MCF 10A (cell line): ENCODE measurements at regions of chr14 and their contacts with region 1.

Region 1: GRCh38 chr14:32076278-32077080 is 625 bp upstream of the ARHGAP5 start:
- DNase-seq: peak; percentile 97
- H3K4me3 Mint-ChIP-seq: peak overlapping the region; percentile 98
- H3K27ac Mint-ChIP-seq: peak overlapping the region; percentile 96
- H3K4me1 Mint-ChIP-seq: peaks cover 31% of the 10 kb centered on the region
- H3K27me3 Mint-ChIP-seq: no peaks in the 10 kb centered on the region
- CTCF ChIP-seq: no peak

Region 2: DNA sequence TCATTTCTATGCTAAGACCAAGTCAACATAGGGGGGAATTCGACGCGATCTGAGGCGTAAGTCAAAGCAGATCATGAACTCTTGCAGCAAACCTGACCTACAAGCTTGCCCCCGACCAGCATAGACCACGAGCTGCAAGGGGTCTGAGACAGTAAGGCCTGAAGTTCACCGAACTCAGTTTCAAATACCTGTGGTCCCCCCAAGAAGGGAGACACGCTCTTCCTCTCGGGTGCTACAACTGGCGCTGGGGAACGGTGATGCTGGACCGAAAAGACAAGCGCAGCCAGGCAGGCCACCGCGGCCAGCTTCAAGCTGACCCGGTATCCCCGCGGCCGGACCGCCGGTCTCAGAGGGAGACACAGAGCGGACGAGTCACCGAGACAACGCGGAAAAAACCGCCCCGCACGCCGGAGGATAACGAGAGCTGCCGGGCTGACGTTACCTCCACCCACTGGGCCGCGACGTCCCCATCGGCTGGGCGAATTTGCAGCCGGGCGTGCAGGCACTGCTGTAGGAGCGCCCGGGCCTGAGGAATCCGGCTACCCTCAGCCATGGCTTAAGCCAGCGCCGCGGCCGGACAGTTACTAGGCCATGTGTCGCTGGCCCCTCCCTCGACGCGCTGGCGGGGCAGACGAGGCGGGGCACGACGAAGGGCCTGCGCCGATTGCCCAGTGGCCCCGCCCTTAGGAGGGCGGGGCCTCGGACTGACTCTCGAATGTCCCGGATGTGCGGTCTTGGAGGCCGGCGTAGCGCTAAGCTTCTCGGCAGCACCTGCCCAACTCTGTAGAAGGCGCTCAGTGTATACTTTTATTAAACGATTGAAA is 619.4 kb before region 1 on chr14 and contains the start of gene DTD2:
- CTCF ChIA-PET with region 1: no interaction called
- POLR2A ChIA-PET with region 1: interaction called, 9 read pairs
- intact Hi-C with region 1: loop called (anchors 10 kb)
- DNase-seq: peak; percentile 96
- H3K4me3 Mint-ChIP-seq: peak within 1 kb of the TSS; percentile 97
- H3K27ac Mint-ChIP-seq: peak within 1 kb of the TSS; percentile 99
- H3K4me1 Mint-ChIP-seq: peaks cover 14% of the 10 kb centered on the region
- H3K27me3 Mint-ChIP-seq: no peaks in the 10 kb centered on the region
- CTCF ChIP-seq: no peak
- total RNA-seq, gene DTD2: 24.4 TPM in 2 replicates

Region 3: GRCh38 chr14:31712244-31713127 is 364.0 kb before region 1 on chr14:
- CTCF ChIA-PET with region 1: no interaction called
- POLR2A ChIA-PET with region 1: no interaction called
- intact Hi-C with region 1: no loop called
- DNase-seq: no peak
- H3K4me3 Mint-ChIP-seq: no peak overlapping the region
- H3K27ac Mint-ChIP-seq: no peak overlapping the region
- H3K4me1 Mint-ChIP-seq: no peaks in the 10 kb centered on the region
- H3K27me3 Mint-ChIP-seq: no peaks in the 10 kb centered on the region
- CTCF ChIP-seq: no peak

Region 4: GRCh38 chr14:31752867-31753661 is 323.4 kb before region 1 on chr14:
- CTCF ChIA-PET with region 1: no interaction called
- POLR2A ChIA-PET with region 1: no interaction called
- intact Hi-C with region 1: no loop called
- DNase-seq: no peak
- H3K4me3 Mint-ChIP-seq: no peak overlapping the region
- H3K27ac Mint-ChIP-seq: no peak overlapping the region
- H3K4me1 Mint-ChIP-seq: no peaks in the 10 kb centered on the region
- H3K27me3 Mint-ChIP-seq: no peaks in the 10 kb centered on the region
- CTCF ChIP-seq: no peak

Region 5: DNA sequence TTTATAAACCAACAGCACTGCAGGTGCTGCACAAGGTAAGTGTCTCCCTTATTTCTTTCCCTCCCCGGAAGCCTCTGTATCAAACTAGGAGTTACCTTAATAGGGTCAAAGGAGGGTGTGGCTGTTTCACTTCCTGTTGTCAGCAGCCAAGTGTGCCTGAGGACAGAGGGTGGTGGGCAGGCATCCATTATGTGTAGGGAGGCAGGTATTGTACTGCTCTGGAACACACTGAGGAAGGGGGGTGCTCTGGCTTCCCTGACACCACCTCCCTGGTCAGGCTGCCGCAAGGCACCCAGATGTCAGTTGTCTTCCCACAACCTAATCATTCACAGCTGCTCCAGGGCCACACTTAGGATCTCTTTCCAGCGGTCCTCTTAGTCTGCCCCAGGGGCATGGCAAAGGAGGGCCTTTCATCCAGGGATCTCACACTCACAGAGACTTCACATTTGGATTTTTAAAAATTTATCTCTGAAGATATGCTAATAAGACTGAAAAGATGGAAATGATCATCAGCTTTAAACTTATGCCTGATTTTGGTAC is 131.3 kb before region 1 on chr14:
- CTCF ChIA-PET with region 1: interaction called, 6 read pairs
- POLR2A ChIA-PET with region 1: interaction called, 74 read pairs
- intact Hi-C with region 1: no loop called
- DNase-seq: no peak
- H3K4me3 Mint-ChIP-seq: no peak overlapping the region
- H3K27ac Mint-ChIP-seq: peak overlapping the region; percentile 20
- H3K4me1 Mint-ChIP-seq: peaks cover 41% of the 10 kb centered on the region
- H3K27me3 Mint-ChIP-seq: no peaks in the 10 kb centered on the region
- CTCF ChIP-seq: no peak

Region 6: DNA sequence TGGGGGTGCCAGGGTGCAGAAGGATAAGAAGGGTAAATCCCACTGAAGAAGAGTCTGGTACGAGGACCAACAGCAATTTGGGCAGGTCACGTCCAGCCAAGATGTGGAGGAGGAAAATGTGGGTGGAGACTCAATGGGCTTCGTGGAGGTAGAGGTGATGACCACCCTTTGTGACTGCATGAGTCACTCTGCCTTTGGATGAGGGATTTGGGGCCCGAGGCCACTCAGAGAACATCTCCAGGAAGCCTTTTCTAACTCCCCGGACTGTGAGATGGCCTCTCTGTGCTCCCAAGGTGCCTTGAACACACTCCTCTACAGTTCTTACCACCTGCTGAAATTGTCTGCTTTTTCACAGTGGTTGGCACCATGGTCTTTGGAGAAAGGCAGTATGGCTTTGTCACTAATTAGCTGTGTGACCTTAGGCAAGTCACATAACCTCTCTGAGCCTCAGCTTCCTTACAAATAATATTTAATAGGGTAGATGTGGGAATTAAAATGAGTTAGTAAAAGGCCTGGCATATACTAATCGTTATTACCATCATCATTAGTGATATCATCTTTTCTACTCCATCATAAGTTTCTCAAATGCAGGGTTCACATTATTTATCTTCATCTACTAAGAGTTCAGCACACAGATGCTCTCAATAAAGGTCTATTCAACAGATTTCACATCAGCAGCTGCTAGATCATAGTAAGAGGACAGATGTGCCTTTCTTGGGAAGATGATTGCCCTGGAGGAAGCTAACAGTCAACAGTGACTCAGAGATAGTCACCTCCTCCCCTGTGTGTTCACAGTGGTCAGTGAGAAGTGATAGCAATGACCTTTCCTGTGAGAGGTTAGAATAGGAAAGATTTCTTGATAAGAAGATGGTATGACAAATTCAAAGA is 66.3 kb before region 1 on chr14:
- CTCF ChIA-PET with region 1: interaction called, 3 read pairs
- POLR2A ChIA-PET with region 1: interaction called, 26 read pairs
- intact Hi-C with region 1: no loop called
- DNase-seq: peak; percentile 71
- H3K4me3 Mint-ChIP-seq: no peak overlapping the region
- H3K27ac Mint-ChIP-seq: peak overlapping the region; percentile 62
- H3K4me1 Mint-ChIP-seq: peaks cover 38% of the 10 kb centered on the region
- H3K27me3 Mint-ChIP-seq: no peaks in the 10 kb centered on the region
- CTCF ChIP-seq: no peak

Region 7: GRCh38 chr14:32087173-32087861 is 10.8 kb after region 1 on chr14:
- CTCF ChIA-PET with region 1: interaction called, 10 read pairs
- POLR2A ChIA-PET with region 1: interaction called, 80 read pairs
- intact Hi-C with region 1: no loop called
- DNase-seq: peak; percentile 61
- H3K4me3 Mint-ChIP-seq: peak overlapping the region; percentile 31
- H3K27ac Mint-ChIP-seq: peak overlapping the region; percentile 57
- H3K4me1 Mint-ChIP-seq: peaks cover 36% of the 10 kb centered on the region
- H3K27me3 Mint-ChIP-seq: no peaks in the 10 kb centered on the region
- CTCF ChIP-seq: no peak

Region 8: DNA sequence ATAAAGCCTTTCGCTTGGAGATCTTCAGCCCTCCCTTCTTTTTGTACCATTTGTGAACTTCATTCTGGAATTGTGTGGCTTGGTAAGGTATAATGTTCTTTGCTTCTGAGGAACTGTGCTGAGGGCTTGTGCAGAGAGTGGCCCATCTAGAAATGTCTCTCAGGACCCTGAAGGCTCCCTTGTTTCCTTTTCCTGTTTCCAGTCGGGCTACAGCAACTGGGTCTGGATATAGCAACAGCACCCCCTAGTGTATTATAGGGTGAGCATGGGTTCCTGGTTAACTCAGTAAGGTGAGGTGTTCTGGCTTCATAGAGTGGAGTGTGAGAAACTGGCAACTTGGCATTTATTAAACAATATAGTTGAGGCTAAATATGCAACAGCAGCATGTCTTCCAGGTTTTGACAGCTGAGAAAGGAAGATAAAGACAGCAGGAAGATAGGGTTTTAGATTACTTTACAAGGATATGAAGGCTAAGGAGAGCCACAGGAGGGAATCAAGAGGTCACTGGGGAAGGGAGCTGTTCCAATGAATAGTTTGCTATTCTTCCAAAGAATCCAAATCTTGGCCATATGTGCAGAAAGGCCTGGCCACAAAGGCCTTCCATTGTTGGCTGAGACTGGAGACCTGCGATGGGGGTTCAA is 175.7 kb after region 1 on chr14:
- CTCF ChIA-PET with region 1: interaction called, 40 read pairs
- POLR2A ChIA-PET with region 1: interaction called, 8 read pairs
- intact Hi-C with region 1: loop called (anchors 1 kb)
- DNase-seq: peak; percentile 76
- H3K4me3 Mint-ChIP-seq: no peak overlapping the region
- H3K27ac Mint-ChIP-seq: no peak overlapping the region
- H3K4me1 Mint-ChIP-seq: peaks cover 11% of the 10 kb centered on the region
- H3K27me3 Mint-ChIP-seq: no peaks in the 10 kb centered on the region
- CTCF ChIP-seq: peak; percentile 82

Region 9: DNA sequence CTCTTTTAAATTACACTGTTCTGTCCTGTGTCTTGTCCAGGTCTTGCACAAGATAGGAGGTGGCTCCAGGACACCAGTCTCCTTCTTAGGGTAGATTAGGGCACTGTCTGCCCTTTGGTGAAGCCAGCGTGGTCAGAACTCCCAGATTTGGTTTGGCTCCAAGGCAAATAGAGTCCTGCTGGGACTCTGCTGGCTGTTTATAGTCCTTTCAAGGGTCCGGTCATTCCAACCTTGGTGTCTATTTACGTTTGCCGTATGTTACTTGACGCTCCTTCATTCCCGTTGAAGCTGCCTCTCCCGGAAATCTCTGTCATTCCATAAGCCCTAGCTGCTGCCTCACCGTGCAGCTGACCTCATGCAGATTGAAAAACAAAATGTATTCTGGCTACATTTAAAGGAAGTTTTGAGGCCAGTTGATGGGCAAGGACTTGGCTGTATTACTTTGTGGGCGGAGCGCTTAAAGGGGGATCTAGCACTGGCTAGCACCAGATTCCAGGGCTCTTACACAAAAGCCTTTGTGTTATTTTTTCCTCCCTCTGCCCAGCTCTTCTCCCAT is 433.2 kb after region 1 on chr14:
- CTCF ChIA-PET with region 1: interaction called, 3 read pairs
- POLR2A ChIA-PET with region 1: interaction called, 10 read pairs
- intact Hi-C with region 1: loop called (anchors 2 kb)
- DNase-seq: peak; percentile 94
- H3K4me3 Mint-ChIP-seq: peak overlapping the region; percentile 65
- H3K27ac Mint-ChIP-seq: peak overlapping the region; percentile 93
- H3K4me1 Mint-ChIP-seq: peaks cover 50% of the 10 kb centered on the region
- H3K27me3 Mint-ChIP-seq: no peaks in the 10 kb centered on the region
- CTCF ChIP-seq: no peak